MCF 10A (cell line): ENCODE measurements at regions of chr9 and their contacts with region 1.

Region 1: GRCh38 chr9:27258662-27259061 is 38.3 kb downstream of the EQTN start:
- DNase-seq: no peak
- H3K4me3 Mint-ChIP-seq: no peak overlapping the region
- H3K27ac Mint-ChIP-seq: no peak overlapping the region
- H3K4me1 Mint-ChIP-seq: no peaks in the 10 kb centered on the region
- H3K27me3 Mint-ChIP-seq: no peaks in the 10 kb centered on the region
- CTCF ChIP-seq: no peak

Region 2: GRCh38 chr9:27194401-27195091 is 64.1 kb before region 1 on chr9:
- CTCF ChIA-PET with region 1: no interaction called
- POLR2A ChIA-PET with region 1: no interaction called
- intact Hi-C with region 1: no loop called
- DNase-seq: peak; percentile 82
- H3K4me3 Mint-ChIP-seq: peak overlapping the region; percentile 13
- H3K27ac Mint-ChIP-seq: peak overlapping the region; percentile 84
- H3K4me1 Mint-ChIP-seq: peaks cover 36% of the 10 kb centered on the region
- H3K27me3 Mint-ChIP-seq: no peaks in the 10 kb centered on the region
- CTCF ChIP-seq: no peak

Region 3: GRCh38 chr9:27247756-27248155 is 10.9 kb before region 1 on chr9:
- CTCF ChIA-PET with region 1: interaction called, 14 read pairs
- POLR2A ChIA-PET with region 1: no interaction called
- intact Hi-C with region 1: no loop called
- DNase-seq: peak; percentile 68
- H3K4me3 Mint-ChIP-seq: no peak overlapping the region
- H3K27ac Mint-ChIP-seq: peak overlapping the region; percentile 38
- H3K4me1 Mint-ChIP-seq: peaks cover 15% of the 10 kb centered on the region
- H3K27me3 Mint-ChIP-seq: no peaks in the 10 kb centered on the region
- CTCF ChIP-seq: peak; percentile 30